Ascending aorta (tissue), 2 donors: ENCODE measurements at regions of chr5 and their contacts with region 1.

Region 1: DNA sequence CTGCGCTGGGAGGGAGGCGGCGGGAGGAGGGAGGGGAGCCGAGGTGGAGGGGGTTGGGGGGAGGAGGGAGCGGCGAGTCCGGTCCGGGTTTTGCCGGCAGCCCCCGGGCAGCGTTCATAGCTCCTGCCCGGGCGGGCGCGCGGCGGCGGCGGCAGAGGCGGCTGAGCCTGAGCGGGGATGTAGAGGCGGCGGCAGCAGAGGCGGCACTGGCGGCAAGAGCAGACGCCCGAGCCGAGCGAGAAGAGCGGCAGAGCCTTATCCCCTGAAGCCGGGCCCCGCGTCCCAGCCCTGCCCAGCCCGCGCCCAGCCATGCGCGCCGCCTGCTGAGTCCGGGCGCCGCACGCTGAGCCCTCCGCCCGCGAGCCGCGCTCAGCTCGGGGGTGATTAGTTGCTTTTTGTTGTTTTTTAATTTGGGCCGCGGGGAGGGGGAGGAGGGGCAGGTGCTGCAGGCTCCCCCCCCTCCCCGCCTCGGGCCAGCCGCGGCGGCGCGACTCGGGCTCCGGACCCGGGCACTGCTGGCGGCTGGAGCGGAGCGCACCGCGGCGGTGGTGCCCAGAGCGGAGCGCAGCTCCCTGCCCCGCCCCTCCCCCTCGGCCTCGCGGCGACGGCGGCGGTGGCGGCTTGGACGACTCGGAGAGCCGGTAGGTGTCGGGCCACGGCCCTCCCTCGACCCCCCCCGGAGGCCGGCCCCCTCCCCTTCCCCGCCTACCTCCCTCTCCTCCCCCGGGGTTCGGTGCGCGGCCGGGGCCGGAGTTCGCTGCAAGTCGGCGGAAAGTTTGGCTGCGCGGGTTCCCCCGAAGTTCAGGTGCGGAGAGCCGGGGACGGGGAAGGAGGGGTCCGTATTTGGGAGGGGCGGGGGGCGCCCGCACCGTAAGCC is at the start of gene CXXC5:
- DNase-seq: peak in 1 of 2 donors; percentile 88
- H3K4me3 ChIP-seq: peak within 1 kb of the TSS; percentile 76 to 79
- H3K27ac ChIP-seq: peak within 1 kb of the TSS; percentile 96
- H3K4me1 ChIP-seq: peaks cover 15 to 28% of the 10 kb centered on the region in 2 donors
- H3K27me3 ChIP-seq: no peaks in the 10 kb centered on the region
- CTCF ChIP-seq: no peak
- total RNA-seq, gene CXXC5: 41.9 TPM

Region 2: DNA sequence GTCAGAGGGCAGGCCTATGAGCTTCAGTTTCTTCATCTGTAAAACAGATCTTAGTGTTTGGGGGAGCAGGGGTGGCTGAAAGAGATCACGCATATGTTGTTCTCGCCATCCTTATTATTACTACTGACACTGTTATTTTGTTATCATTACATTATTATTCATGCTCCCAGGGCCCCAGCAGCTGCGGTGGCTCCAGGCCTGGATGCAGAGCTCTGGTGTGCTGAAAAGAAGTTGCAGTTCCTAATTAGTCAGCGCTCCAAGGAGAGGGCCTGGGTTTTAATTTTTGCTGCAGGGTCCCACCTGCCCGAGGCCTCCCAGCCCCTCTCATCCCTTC is 19.3 kb after region 1 on chr5:
- intact Hi-C with region 1: loop called (anchors 1 kb)
- DNase-seq: no peak
- H3K4me3 ChIP-seq: peak overlapping the region; percentile 51 to 62
- H3K27ac ChIP-seq: peak overlapping the region; percentile 96
- H3K4me1 ChIP-seq: peaks cover 44 to 86% of the 10 kb centered on the region in 2 donors
- H3K27me3 ChIP-seq: no peaks in the 10 kb centered on the region
- CTCF ChIP-seq: no peak

Region 3: DNA sequence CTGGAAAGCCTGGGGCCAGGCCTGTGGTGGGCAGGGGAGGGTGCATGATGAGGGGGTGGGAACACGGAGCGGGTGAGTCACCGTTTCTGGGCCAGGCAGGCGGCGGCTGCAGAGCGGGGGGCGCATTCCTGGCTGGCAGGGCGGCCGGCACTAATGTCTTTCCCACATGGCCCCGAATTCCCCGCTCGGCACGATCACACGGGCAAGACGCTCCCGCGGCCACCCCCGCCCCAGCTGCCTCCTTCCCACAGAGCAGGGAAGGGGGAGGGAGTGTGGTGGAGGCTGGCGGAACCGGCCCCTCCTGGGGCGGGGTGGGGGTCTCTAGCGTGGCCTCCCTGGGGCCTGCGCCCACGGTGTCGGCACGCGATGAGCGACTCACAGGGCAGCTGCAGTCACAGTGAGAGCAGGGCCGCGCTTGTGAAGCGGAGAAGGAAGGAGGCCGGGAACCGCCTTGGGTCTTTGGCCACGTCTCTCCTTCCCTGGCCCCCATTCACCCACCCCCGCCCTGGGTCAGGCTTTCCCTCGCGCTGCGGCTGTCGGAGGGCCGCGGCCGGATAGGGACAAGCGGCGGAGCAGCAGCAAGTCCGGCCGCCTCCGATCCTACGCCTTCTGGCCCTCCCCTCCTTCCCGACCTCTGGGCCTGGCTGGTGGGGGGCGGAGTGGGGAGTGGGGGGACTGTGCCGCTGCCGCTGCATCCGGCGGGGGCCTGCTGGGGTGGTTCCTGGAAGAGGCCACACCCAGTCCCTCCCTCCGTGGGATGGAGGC is 48.6 kb after region 1 on chr5:
- intact Hi-C with region 1: loop called (anchors 2 kb)
- DNase-seq: peak in 1 of 2 donors; percentile 89
- H3K4me3 ChIP-seq: peak overlapping the region; percentile 62 to 68
- H3K27ac ChIP-seq: peak overlapping the region; percentile 96
- H3K4me1 ChIP-seq: peaks cover 17 to 37% of the 10 kb centered on the region in 2 donors
- H3K27me3 ChIP-seq: no peaks in the 10 kb centered on the region
- CTCF ChIP-seq: no peak